ENCODE measurements at regions of chr6 and their contacts with region 1.

Region 1: DNA sequence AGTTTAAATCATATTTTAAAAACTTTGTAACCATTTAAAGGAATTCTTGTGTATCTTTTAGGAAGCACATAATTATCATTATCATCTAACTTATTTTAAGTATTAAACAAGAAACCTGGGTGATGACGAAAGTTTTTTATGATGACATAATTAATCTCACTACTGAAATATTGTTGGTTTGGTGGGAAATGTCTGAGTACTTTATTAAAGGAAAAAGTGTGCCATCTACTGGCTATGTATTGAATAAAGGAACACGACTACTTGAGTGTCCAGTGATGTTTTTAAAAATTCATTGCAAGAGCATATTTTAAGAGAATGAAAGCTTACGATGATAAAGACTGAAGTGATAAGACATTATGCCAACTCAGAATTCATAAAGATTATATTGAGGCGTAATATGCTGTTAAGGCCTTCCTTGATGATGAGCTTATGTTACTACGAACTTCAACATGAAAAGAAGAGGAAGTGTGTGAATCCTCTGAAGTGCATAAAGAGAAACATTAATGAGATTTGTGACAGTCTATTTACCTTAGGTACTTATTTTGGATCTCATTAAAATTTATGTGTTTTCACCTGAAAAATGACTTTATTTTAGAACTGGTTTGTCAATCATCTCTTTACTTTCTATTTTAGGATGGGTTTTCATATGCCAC is 12.0 kb upstream of the TRMT11 start:
- DNase-seq: no peak
- ATAC-seq: peak; percentile 71

Region 2: GRCh38 chr6:125310994-125311649 is 663.2 kb before region 1 on chr6:
- intact Hi-C with region 1: loop called (anchors 5 kb)
- DNase-seq: no peak
- ATAC-seq: peak; percentile 80

Region 3: DNA sequence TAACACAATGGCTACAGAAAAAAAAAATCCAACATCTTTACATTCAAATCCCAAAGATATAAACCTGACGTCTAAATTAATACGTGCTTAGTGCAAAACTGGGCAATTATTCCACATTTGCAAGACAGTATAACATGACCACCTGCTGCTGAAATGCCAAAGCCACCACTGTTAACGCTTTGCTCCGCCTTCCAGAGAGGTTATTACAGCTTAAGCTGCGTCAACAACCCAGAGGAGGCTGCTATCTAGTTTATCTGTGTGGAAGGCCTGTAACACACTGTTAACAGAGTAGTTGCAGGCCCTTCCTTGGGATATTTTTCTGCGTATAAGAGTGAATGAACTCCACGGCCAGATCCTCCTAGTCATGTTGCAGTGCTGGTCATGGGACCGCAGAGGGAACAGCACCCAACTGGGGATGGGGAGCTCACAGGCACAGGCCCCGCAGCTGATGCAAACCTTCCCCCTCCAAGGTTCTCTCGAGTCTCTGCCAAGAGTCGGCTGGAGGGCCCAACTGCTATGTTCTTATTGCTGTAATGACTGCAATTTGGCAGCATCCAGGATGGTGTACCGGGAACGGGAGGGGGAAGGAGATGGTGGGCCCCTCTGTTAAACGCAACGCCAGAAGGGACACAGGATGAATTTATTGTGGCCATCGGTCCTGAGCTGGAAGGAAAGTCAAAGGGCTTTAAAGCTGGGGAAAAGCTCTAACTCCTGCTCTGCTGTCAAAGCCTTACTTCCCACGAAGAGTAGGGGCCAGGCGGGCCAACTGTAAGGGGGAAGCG is 184.6 kb before region 1 on chr6:
- intact Hi-C with region 1: loop called (anchors 5 kb)
- DNase-seq: peak; percentile 72
- ATAC-seq: peak; percentile 32